Activated B cell treated with CpG ODN at 0.5 μM for 24 hours (primary cell): ENCODE measurements at regions of chr9 and their contacts with region 1.

Region 1: GRCh38 chr9:34126207-34127034 is at the start of gene DCAF12:
- DNase-seq: peak; percentile 71
- ATAC-seq: peak; percentile 81
- H3K4me3 Mint-ChIP-seq: peak within 1 kb of the TSS; percentile 90
- H3K27ac Mint-ChIP-seq: peak within 1 kb of the TSS; percentile 72
- H3K4me1 Mint-ChIP-seq: peaks cover 52% of the 10 kb centered on the region
- H3K27me3 Mint-ChIP-seq: peaks cover 39% of the 10 kb centered on the region
- CTCF ChIP-seq: no peak
- total RNA-seq, gene DCAF12: 3.8 and 5.9 TPM in 2 replicates

Region 2: DNA sequence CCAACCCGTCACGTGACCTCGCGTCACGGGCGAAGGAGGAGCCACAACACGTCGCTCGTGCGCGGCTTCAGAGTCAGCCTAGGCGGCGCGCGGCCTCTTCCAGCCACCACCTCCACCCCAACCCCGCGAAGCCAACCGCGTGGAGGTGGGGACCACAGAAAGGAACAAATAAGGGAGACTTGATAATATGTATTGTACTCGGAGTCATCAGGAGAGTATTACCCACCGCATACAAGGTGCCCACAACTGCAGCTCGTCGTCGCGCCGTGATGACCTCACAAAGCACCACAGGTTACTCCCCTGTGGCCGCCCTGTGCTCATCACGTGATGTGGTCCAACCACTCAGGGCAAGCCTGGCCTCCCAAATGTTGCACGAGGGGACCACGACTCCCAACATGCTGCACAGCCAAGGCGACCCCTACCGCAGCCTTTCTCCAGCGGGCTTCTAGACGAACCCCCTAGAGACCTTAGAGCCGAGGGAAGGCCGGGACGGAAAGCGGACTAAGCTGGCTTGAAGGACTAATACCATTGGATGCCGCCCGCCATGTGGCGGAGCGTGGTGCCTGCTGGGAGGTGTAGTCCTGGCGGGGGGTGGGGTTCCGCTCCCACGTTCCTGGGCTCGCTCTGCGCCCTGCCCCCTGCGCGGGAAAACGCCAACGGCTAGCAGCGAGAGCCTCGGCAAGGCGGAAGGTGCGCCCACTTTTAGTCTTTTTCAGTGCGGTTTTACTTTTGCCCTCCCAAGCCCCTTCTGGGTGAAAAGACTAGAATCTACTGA is 77.3 kb before region 1 on chr9:
- CTCF ChIA-PET with region 1: no interaction called
- POLR2A ChIA-PET with region 1: interaction called, 3 read pairs
- intact Hi-C with region 1: loop called (anchors 1 kb)
- DNase-seq: peak; percentile 97
- ATAC-seq: peak; percentile 80
- H3K4me3 Mint-ChIP-seq: peak overlapping the region; percentile 99
- H3K27ac Mint-ChIP-seq: peak overlapping the region; percentile 100
- H3K4me1 Mint-ChIP-seq: peaks cover 25% of the 10 kb centered on the region
- H3K27me3 Mint-ChIP-seq: no peaks in the 10 kb centered on the region
- CTCF ChIP-seq: no peak

Region 3: DNA sequence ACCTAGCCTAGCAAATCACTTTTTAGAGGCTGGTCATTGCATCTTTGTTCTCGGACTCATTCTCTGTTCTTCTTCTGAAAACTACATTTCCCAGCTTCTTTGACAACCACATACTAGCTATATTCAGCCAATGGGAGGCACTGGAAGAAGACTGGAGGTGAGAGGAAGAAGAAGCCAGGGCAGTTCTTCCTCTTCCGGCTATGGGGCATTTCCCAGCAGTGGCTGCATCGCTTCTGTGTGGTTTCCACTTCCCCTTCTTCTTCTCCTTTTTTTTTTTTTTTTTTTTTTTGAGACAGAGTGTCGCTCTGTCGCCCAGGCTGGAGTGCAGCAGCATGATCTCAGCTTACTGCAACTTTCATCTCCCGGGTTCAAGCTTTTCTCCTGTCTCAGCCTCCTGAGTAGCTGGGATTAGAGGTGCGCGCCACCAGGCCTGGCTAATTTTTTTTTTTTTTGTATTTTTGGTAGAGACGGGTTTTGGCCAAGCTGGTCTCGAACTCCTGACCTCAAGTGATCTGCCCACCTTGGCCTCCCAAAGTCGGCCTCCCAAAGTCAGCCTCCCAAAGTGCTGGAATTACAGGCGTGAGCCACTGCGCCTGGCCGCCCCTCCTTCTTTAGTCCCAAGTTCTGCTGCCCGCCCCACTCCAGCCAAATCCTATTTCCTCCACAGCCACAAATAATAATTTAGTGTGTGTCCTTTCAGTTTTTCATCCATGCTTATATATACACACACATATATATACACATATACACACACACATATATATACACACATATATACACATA is 45.5 kb after region 1 on chr9:
- CTCF ChIA-PET with region 1: no interaction called
- POLR2A ChIA-PET with region 1: no interaction called
- intact Hi-C with region 1: loop called (anchors 1 kb)
- DNase-seq: peak; percentile 22
- ATAC-seq: peak; percentile 99
- H3K4me3 Mint-ChIP-seq: peak overlapping the region; percentile 29
- H3K27ac Mint-ChIP-seq: no peak overlapping the region
- H3K4me1 Mint-ChIP-seq: peaks cover 11% of the 10 kb centered on the region
- H3K27me3 Mint-ChIP-seq: peaks cover 12% of the 10 kb centered on the region
- CTCF ChIP-seq: no peak